ENCODE measurements at regions of chr1 and their contacts with region 1.

Region 1: DNA sequence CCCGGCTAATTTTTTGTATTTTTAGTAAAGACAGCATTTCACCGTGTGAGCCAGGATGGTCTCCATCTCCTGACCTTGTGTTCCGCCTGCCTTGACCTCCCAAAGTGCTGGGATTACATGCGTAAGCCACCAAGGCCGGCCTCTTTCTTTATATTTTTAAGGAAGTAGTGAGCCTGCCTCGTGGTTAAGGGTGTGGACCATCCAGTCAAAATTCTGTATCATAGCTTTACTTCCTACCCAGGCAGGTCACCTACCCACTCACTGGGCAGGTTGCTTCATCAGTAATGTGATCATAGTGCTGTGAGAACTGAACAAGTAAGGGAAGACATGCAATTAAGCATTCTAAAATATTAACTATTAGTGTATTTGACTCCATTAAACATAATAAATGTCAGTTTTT is 8.1 kb upstream of the ACOT7 start:
- DNase-seq: no peak
- ATAC-seq: no peak

Region 2: DNA sequence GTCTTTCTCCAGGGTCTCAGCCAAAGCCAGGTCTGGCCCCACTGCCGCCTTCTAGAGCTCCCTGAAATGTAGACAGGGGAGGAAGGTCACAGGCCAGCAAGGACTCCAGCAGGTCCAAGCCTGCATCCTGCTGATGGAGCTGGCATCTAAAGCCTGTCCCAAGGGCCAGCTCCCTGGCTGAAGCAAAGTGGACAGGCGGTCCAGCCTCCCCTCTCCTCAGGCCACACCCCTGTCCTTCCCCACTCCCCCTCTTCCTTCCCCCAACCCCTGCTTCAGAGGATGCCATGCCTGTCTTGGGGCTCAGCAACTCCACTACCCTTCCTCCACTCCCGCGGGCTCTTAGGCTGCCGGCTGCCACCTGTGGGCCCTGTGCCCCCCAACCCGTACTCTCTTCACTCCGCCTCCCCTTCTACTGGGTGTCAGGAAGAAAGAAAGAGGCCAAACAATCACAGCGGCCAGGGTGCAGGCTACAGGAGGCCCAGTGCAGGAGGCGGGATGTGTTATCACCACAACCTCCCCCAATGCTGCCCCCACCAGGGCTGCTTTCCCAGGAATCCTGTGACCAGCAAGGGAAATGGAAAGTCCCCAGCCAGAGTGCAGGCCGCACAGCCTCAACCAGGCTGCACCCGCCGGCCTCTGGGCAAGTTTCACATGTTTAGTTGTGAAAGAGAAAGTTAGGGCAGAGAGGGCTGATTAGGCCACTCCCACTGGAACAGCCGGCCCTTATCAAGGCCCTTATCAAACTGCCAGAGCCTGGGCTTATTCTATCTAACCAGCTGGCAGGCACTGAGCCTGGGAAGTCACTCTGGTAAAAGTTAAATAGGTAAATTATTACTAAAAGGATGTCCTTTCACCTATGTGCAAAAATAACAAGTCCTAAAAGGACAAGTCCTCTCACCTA is 42.2 kb before region 1 on chr1:
- intact Hi-C with region 1: loop called in 1 of 2 experiments (anchors 2 kb)
- DNase-seq: peak; percentile 75
- ATAC-seq: peak; percentile 81 to 87

Region 3: DNA sequence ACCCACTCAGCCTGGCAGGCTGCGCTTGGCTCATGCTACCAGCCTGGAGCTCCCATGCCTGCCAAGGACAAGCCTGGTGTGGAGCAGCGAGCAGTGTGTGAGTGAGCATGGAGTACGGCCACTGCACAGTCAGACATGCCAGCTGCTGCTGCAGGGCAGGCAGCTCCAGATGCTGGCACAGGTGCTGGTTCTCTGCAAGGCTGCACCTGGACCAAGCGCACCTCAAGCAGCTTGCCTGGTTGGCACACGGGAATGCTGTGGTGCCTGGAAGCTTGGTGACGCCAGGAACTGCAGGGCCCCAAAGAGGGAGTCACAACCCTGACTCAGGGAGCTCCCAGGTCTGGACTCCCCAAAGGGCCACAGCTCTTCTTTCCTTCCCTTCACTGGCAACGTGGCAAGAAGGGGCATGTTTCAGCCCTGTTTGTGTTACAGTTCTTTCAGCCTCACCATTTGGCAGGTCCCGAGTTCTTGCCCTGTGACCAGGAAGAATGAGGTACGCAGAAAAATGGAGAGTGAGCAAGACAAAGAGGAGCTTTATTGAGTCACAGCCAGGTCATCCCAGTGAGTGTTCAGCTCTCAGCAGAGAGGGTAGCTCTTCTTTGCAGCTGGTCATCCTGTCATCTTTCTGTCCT is 34.2 kb before region 1 on chr1:
- intact Hi-C with region 1: loop called (anchors 2 to 5 kb)
- DNase-seq: no peak
- ATAC-seq: peak; percentile 72 to 87

Region 4: DNA sequence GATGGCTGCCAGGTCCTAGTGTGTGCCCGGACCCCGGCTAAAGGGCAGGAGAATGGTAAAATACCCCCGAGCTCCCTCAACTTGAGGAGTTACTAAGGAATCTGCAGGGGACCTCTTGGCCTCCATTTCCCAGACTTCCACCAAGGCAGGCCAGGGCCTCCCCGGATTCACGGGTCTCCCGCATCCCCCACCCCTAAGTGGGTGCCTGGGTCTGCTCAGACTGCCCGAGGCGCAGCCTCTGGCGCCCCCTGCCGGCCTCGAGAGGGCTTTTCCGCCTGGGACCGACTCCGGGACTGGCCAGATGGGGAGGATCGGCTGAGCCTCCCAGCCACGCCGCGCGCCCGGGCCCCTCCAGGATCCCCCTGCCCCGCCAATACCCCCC is 88.1 kb after region 1 on chr1:
- intact Hi-C with region 1: no loop called
- DNase-seq: peak; percentile 77
- ATAC-seq: peak; percentile 71 to 77